Psoas muscle (tissue), 8 donors: ENCODE measurements at regions of chrX and their contacts with region 1.

Region 1: DNA sequence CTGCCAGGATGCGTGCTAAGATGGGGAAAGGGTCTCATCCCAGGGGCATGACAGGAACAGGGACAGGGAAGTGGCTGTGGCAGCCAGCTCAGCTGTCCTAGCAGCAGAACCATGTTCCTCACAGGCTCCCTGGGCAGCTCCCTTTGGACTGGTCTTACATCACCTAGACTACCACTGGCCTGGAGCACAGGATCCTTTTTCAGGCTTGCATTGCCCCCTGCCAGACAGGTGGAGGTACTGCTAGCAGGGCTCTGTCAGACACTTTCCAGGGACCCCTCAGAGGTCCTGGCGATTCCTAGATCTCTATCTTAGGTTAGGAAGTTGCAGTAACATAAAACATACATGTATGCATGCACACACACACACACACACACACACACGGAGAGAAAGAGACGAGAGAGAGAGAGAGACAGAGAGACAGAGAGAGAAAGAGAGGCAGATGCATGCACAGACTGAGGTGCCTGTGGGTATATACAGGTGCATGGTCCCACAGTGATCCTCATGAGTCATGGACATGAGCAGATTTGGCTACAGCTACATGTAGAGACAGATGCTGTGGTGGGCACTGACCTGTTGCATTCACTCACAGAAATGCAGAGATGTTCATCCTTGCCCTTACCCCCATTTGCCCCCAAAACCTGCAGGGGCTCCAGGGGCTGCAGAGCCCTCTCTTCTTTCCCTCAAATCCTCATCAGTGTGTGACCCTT is 63.6 kb downstream of the STARD8 start:
- DNase-seq: peak; percentile 28 to 61
- ATAC-seq: peak; percentile 66 to 82 (median 78)
- H3K4me3 ChIP-seq: no peak overlapping the region
- H3K27ac ChIP-seq: no peak overlapping the region
- H3K4me1 ChIP-seq: peaks cover 24% of the 10 kb centered on the region
- H3K27me3 ChIP-seq: peaks cover 0 to 18% (median 0%) of the 10 kb centered on the region in 3 donors
- CTCF ChIP-seq: peak; percentile 60

Region 2: DNA sequence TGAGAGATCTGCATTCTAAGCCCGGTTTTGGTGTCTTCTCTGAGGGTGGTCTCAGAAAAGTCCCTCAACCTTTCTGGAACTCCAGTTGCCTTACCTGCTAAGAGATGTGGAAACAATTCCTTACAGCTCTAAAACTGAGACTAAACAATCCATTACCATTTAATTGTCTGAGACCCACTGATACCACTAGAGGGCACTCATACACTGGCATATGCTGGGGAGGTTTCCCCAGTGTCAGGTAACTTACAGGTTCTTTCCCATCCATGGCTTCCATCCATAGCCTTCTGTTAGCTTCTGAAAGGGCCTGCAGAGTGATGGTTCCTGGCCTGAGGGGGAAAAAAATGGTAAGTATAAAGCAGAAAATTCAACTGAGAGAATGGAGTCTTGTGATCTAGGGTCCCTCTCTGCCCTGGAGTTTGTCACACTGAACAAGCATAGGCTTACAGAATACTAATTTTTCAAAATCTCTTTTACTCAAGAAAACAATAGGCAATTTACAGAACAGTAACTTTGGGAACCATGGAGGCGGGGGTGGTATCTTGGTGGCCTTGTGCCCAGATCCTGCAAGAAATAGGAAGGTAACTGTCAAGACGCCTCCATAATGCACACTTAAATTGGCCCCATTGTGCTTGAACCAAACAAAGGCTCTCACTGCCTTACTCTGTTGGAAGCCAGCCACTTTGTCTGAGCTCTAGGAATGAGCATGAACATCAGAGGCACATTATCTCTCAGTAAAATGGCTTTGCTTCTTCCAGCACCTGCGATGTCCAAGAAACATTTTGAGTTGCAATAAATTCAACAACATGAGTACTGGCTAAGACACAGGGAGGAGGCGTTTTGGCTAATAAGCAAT is 513.9 kb before region 1 on chrX:
- intact Hi-C with region 1: loop called in 1 of 2 experiments (anchors 5 kb)
- DNase-seq: no peak
- ATAC-seq: peak; percentile 66 to 76 (median 73)
- H3K4me3 ChIP-seq: no peak overlapping the region
- H3K27ac ChIP-seq: no peak overlapping the region
- H3K4me1 ChIP-seq: no peaks in the 10 kb centered on the region
- H3K27me3 ChIP-seq: no peaks in the 10 kb centered on the region
- CTCF ChIP-seq: peak; percentile 69

Region 3: GRCh38 chrX:68599251-68600152 is 111.5 kb before region 1 on chrX:
- intact Hi-C with region 1: loop called in 1 of 2 experiments (anchors 5 kb)
- DNase-seq: no peak
- ATAC-seq: no peak
- H3K4me3 ChIP-seq: no peak overlapping the region
- H3K27ac ChIP-seq: no peak overlapping the region
- H3K4me1 ChIP-seq: no peaks in the 10 kb centered on the region
- H3K27me3 ChIP-seq: peaks cover 0 to 7% (median 2%) of the 10 kb centered on the region in 3 donors
- CTCF ChIP-seq: peak; percentile 71

Region 4: GRCh38 chrX:69503782-69504625 is 793.0 kb after region 1 on chrX and contains the start of gene NALF2:
- intact Hi-C with region 1: no loop called
- DNase-seq: peak; percentile 56 to 71
- ATAC-seq: peak; percentile 65 to 84 (median 76)
- H3K4me3 ChIP-seq: peak within 1 kb of the TSS; percentile 62
- H3K27ac ChIP-seq: no peak within 1 kb of the TSS
- H3K4me1 ChIP-seq: no peaks in the 10 kb centered on the region
- H3K27me3 ChIP-seq: peaks cover 0 to 67% (median 6%) of the 10 kb centered on the region in 3 donors
- CTCF ChIP-seq: no peak
- total RNA-seq, gene NALF2: 0.09 to 0.14 (median 0.11) TPM in 3 of 4 donors, not detected in the other